Activated B cell treated with CpG ODN at 0.5 μM for 24 hours (primary cell): ENCODE measurements at regions of chr13 and their contacts with region 1.

Region 1: DNA sequence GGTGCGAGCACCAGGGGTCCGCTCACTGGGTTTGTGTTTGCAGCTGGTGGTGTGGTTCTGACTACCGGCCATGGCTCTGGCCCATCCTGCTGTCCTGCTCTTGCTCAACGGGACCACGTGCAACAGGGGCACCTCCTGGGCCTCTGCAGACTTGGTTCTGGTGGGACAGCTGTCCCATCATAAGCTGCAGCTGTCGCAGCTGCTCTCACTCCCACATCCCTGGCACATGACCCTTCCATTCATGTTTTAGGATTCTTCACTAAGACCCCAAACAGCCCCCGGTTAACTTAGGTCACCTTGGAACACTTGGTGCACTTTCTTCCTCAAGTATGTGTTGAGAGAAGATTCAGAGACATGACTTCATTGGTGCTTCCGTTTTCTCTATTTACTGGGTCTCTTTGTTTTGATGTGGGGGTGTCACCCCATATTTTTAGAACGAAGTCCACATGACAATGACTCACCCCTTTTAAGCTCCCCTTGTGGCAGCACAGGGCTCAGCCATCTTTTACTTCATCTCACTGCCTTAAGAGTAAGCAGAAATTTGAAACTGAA is 68.4 kb upstream of the ARHGEF7 start:
- DNase-seq: no peak
- ATAC-seq: peak; percentile 60
- H3K4me3 Mint-ChIP-seq: peak overlapping the region; percentile 32
- H3K27ac Mint-ChIP-seq: peak overlapping the region; percentile 50
- H3K4me1 Mint-ChIP-seq: peaks cover 10% of the 10 kb centered on the region
- H3K27me3 Mint-ChIP-seq: peaks cover 9% of the 10 kb centered on the region
- CTCF ChIP-seq: no peak

Region 2: GRCh38 chr13:110218581-110219201 is 828.0 kb before region 1 on chr13:
- CTCF ChIA-PET with region 1: no interaction called
- POLR2A ChIA-PET with region 1: no interaction called
- intact Hi-C with region 1: loop called (anchors 5 kb)
- DNase-seq: no peak
- ATAC-seq: no peak
- H3K4me3 Mint-ChIP-seq: no peak overlapping the region
- H3K27ac Mint-ChIP-seq: no peak overlapping the region
- H3K4me1 Mint-ChIP-seq: no peaks in the 10 kb centered on the region
- H3K27me3 Mint-ChIP-seq: peaks cover 2% of the 10 kb centered on the region
- CTCF ChIP-seq: no peak

Region 3: DNA sequence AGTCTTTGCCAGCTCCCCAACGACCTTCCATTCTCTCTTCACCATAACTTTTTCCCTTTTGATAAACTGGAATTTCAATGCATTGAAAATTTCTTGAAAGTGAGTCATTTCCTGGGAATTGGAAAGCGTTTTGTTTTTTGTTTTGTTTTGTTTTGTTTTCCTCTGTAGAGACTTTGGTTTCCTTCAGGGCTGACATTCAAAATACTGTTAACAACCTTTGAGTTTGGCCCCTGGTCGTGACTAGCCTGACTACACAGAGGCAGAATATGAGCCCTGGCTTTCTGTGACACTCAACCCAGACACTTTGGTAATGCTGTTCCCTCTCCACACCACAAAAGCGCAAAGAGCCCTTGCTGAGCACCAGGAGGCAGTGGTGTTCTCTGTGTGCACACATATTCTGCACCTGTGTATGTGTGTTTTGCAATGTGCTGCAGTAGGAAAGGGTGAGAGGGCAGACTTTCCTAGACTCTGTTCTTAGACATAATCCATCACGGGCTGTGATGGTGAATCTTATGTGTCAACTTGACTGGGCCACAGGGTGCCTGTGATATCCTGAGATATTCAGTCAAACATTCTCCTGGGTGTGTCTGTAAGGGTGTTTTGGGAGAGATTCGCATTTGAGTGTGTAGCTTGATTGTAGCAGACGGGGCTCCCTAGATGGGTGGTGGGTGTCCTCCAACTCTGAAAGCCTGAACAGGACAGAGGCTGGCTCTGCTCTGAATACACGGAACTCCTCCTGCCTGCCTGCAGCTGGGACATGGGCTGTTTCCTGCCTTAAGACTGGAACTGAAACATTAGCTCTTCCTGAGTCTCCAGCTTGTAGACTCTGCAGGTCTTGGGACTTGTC is 102.3 kb before region 1 on chr13:
- CTCF ChIA-PET with region 1: interaction called, 4 read pairs
- POLR2A ChIA-PET with region 1: no interaction called
- intact Hi-C with region 1: loop called (anchors 1 kb)
- DNase-seq: no peak
- ATAC-seq: peak; percentile 43
- H3K4me3 Mint-ChIP-seq: no peak overlapping the region
- H3K27ac Mint-ChIP-seq: no peak overlapping the region
- H3K4me1 Mint-ChIP-seq: peaks cover 25% of the 10 kb centered on the region
- H3K27me3 Mint-ChIP-seq: peaks cover 1% of the 10 kb centered on the region
- CTCF ChIP-seq: no peak

Region 4: DNA sequence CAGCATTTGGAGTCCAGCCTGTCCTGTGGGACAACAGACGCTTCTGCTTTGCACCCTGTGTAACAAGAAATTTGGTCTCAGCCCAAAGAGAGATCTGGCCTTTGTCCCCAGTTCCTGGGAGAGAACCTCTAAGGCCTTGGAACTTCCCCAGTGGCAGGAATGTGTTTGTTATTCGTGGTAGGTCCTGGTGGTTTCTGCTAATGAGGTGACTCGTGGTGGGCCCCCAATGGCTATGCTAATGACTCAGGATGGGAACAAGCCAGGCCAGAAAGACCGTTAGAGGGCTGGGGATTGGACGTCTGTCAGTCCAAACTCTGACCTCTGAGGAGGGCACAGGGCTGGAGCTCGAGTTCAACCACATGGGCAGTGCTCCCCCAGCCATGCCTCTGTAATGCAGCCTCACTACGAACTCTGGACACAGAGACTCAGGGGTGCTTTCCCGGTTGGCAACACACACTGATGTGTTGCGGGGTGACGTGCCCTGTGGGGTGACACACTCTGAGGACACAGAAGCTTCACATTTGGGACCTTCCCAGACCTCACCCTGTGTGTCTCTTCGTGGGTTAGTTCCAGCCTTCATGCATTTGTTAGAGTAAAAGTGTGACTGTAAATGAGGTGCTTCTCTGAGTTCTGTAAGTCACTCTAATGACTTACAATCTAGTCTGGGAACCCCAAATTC is 312.7 kb after region 1 on chr13:
- CTCF ChIA-PET with region 1: no interaction called
- POLR2A ChIA-PET with region 1: no interaction called
- intact Hi-C with region 1: no loop called
- DNase-seq: no peak
- ATAC-seq: no peak
- H3K4me3 Mint-ChIP-seq: no peak overlapping the region
- H3K27ac Mint-ChIP-seq: no peak overlapping the region
- H3K4me1 Mint-ChIP-seq: no peaks in the 10 kb centered on the region
- H3K27me3 Mint-ChIP-seq: no peaks in the 10 kb centered on the region
- CTCF ChIP-seq: no peak